MCF 10A (cell line): ENCODE measurements at regions of chr9 and their contacts with region 1.

Region 1: GRCh38 chr9:107172160-107172978 is 110.7 kb upstream of the RAD23B start:
- DNase-seq: peak; percentile 84
- H3K4me3 Mint-ChIP-seq: no peak overlapping the region
- H3K27ac Mint-ChIP-seq: no peak overlapping the region
- H3K4me1 Mint-ChIP-seq: peaks cover 8% of the 10 kb centered on the region
- H3K27me3 Mint-ChIP-seq: no peaks in the 10 kb centered on the region
- CTCF ChIP-seq: peak; percentile 87

Region 2: DNA sequence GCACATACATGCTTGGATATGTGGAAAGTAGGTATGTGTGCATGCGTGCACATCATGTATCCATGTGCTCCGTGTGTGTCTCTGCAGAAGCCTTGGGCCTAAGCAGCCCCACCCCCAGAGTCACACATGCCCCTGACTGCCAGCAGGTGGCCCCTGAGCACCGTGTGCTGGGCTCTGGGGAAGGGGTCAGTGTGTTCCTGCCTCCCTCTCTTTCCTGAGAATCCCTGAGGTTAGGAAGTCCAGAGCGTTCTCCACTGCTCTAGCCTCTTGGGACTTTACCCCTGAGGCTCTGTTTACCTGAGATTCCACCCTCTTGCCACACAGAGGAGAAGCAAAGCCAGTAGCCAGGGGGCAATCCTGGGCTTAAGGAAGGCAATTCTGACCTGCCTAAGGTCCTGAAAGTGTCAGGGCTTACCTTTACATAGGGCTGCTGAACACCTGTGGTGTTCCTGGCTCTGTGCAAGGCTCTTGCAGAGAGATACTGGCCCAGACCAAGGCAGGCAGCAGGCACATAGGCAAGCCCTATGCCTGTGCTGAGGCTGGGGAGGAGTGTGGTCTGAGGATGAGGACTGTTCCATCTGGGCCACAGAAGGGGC is 1270.8 kb before region 1 on chr9:
- CTCF ChIA-PET with region 1: interaction called, 5 read pairs
- POLR2A ChIA-PET with region 1: interaction called, 3 read pairs
- intact Hi-C with region 1: loop called (anchors 5 kb)
- DNase-seq: peak; percentile 68
- H3K4me3 Mint-ChIP-seq: no peak overlapping the region
- H3K27ac Mint-ChIP-seq: no peak overlapping the region
- H3K4me1 Mint-ChIP-seq: no peaks in the 10 kb centered on the region
- H3K27me3 Mint-ChIP-seq: no peaks in the 10 kb centered on the region
- CTCF ChIP-seq: peak; percentile 63

Region 3: GRCh38 chr9:107198718-107199117 is 26.3 kb after region 1 on chr9:
- CTCF ChIA-PET with region 1: no interaction called
- POLR2A ChIA-PET with region 1: no interaction called
- intact Hi-C with region 1: no loop called
- DNase-seq: no peak
- H3K4me3 Mint-ChIP-seq: no peak overlapping the region
- H3K27ac Mint-ChIP-seq: no peak overlapping the region
- H3K4me1 Mint-ChIP-seq: no peaks in the 10 kb centered on the region
- H3K27me3 Mint-ChIP-seq: no peaks in the 10 kb centered on the region
- CTCF ChIP-seq: no peak

Region 4: DNA sequence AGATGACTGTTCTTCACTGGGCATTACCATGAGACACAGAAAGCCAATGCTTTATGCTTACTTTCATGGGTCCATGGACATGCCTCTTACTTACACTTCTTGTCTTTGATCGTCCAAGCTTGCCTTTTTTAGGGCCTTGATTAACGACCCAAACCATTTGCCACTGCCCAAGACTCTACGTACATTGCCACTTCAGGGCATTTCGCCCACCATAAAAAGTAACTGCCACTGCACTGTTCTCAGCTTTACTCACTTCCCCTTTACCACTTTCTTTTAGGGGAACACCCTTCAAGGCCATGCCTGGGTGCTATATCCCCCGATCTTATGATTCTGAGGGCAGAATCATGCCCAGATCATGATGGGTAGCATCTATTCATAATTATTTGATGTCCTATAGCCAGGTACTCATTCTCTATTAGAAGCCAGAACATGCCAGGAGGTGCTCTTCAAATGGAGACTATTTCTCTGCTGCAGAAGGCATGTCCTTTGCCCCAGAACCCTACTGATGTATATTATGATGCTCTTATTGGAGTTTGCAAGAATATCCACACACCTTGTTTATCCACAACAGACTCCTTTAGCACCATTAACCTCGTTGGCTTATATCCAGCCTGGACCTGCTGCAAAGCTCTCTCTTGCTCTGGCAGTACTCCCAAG is 46.6 kb after region 1 on chr9:
- CTCF ChIA-PET with region 1: no interaction called
- POLR2A ChIA-PET with region 1: no interaction called
- intact Hi-C with region 1: no loop called
- DNase-seq: no peak
- H3K4me3 Mint-ChIP-seq: no peak overlapping the region
- H3K27ac Mint-ChIP-seq: no peak overlapping the region
- H3K4me1 Mint-ChIP-seq: peaks cover 6% of the 10 kb centered on the region
- H3K27me3 Mint-ChIP-seq: no peaks in the 10 kb centered on the region
- CTCF ChIP-seq: no peak

Region 5: DNA sequence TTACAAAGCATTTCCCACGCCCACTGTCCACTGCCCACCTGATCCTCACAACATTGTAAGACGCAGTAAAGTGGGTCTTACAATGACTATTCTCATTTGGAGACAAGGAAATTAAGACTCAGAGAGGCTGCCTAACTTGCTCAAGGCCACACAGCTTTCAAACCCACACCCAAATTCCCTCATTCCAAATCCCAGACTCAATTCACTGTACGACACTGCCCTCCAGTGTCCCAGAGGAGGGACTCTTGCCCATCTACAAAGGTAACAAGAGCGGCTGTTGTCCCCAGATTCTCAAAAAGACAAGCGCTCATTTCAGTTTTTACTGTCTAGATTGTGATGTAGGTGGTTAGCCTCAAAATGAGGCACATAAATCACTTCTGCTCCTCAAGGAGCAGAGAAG is 1498.8 kb after region 1 on chr9:
- CTCF ChIA-PET with region 1: no interaction called
- POLR2A ChIA-PET with region 1: no interaction called
- intact Hi-C with region 1: no loop called
- DNase-seq: peak; percentile 64
- H3K4me3 Mint-ChIP-seq: no peak overlapping the region
- H3K27ac Mint-ChIP-seq: peak overlapping the region; percentile 44
- H3K4me1 Mint-ChIP-seq: peaks cover 58% of the 10 kb centered on the region
- H3K27me3 Mint-ChIP-seq: no peaks in the 10 kb centered on the region
- CTCF ChIP-seq: peak; percentile 86